ENCODE measurements at regions of chr18 and their contacts with region 1.

Region 1: DNA sequence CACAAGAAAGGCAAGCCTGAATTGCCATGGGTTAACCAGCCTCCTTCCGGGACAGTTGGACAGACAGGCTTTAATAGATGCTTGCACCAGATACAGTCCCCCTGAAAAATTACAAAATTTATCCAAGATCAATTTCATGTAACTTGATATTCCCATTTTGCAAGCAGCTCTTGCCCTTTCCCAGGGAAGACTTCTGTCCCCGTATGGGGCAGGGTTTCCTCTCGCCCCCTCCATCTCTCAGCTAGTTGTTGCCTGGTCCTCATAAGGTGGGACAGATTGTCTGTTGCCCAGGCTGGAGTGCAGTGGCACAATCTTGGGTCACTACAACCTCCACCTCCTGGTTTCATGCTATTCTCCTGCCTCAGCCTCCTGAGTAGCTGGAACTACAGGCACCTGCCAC is 61.2 kb downstream of the TTC39C start:
- DNase-seq: no peak
- H3K4me3 ChIP-seq: peak overlapping the region in 1 of 4 donors; percentile 6
- H3K27ac ChIP-seq: peak overlapping the region; percentile 54 to 71 (median 64)
- H3K4me1 ChIP-seq: peaks cover 10 to 18% (median 16%) of the 10 kb centered on the region in 4 donors
- H3K27me3 ChIP-seq: no peaks in the 10 kb centered on the region
- CTCF ChIP-seq: no peak
- EP300 ChIP-seq: no peak
- POLR2A ChIP-seq: no peak

Region 2: GRCh38 chr18:23934252-23934651 is 141.5 kb before region 1 on chr18:
- intact Hi-C with region 1: loop called (anchors 5 kb)
- DNase-seq: no peak
- H3K4me3 ChIP-seq: no peak overlapping the region
- H3K27ac ChIP-seq: no peak overlapping the region
- H3K4me1 ChIP-seq: peaks cover 4 to 9% (median 7%) of the 10 kb centered on the region in 4 donors
- H3K27me3 ChIP-seq: no peaks in the 10 kb centered on the region
- CTCF ChIP-seq: no peak
- EP300 ChIP-seq: no peak
- POLR2A ChIP-seq: no peak

Region 3: GRCh38 chr18:24019641-24020331 is 55.9 kb before region 1 on chr18:
- intact Hi-C with region 1: loop called (anchors 10 kb)
- DNase-seq: no peak
- H3K4me3 ChIP-seq: no peak overlapping the region
- H3K27ac ChIP-seq: no peak overlapping the region
- H3K4me1 ChIP-seq: peaks cover 10 to 32% (median 23%) of the 10 kb centered on the region in 4 donors
- H3K27me3 ChIP-seq: no peaks in the 10 kb centered on the region
- CTCF ChIP-seq: no peak
- EP300 ChIP-seq: no peak
- POLR2A ChIP-seq: no peak

Region 4: GRCh38 chr18:24465486-24465885 is 389.8 kb after region 1 on chr18:
- intact Hi-C with region 1: no loop called
- DNase-seq: no peak
- H3K4me3 ChIP-seq: no peak overlapping the region
- H3K27ac ChIP-seq: no peak overlapping the region
- H3K4me1 ChIP-seq: no peaks in the 10 kb centered on the region
- H3K27me3 ChIP-seq: no peaks in the 10 kb centered on the region
- CTCF ChIP-seq: no peak
- EP300 ChIP-seq: no peak
- POLR2A ChIP-seq: no peak

Measured in esophagus muscularis mucosa (tissue), 4 donors.